ENCODE measurements at regions of chr5 and their contacts with region 1.

Region 1: GRCh38 chr5:132007399-132008165 is 3.9 kb downstream of the ACSL6 start:
- DNase-seq: peak; percentile 30 to 87 (median 65)
- ATAC-seq: peak; percentile 46 to 73 (median 55)
- H3K4me3 ChIP-seq: no peak overlapping the region
- H3K4me3 Mint-ChIP-seq: no peak overlapping the region
- H3K27ac ChIP-seq: no peak overlapping the region
- H3K27ac Mint-ChIP-seq: no peak overlapping the region
- H3K4me1 ChIP-seq: peaks cover 0 to 33% of the 10 kb centered on the region in 2 experiments
- H3K4me1 Mint-ChIP-seq: peaks cover 33 to 46% (median 33%) of the 10 kb centered on the region in 3 donors
- H3K27me3 ChIP-seq: peaks cover 0 to 39% of the 10 kb centered on the region in 2 experiments
- H3K27me3 Mint-ChIP-seq: peaks cover 8 to 18% of the 10 kb centered on the region in 2 donors

Region 2: DNA sequence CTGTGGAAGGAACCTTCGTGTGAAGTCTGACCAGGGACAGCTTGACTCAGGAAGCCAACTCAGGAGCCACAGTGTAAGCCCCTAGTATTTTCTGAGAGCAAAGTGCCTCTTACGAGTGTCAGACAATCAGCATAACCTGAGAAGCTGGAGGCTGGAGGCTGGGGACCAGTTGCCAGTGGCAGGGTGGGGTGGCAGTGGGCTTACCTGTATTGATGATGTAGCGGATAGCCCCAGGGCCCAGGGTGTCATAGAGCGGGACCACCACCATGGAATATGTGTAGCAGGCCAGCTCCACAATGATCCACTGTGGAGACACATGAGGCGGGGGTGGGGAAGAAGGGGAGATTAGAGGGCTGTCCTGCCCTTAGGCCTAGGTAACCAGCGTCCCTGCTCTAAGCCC is 19.0 kb before region 1 on chr5:
- CTCF ChIA-PET with region 1: interaction called in 1 of 2 experiments, 12 read pairs
- POLR2A ChIA-PET with region 1: no interaction called
- DNase-seq: no peak
- ATAC-seq: no peak
- H3K4me3 ChIP-seq: no peak overlapping the region
- H3K4me3 Mint-ChIP-seq: no peak overlapping the region
- H3K27ac ChIP-seq: no peak overlapping the region
- H3K27ac Mint-ChIP-seq: no peak overlapping the region
- H3K4me1 ChIP-seq: peaks cover 0 to under 1% of the 10 kb centered on the region in 2 experiments
- H3K4me1 Mint-ChIP-seq: peaks cover 0 to 6% (median 6%) of the 10 kb centered on the region in 3 donors
- H3K27me3 ChIP-seq: peaks cover 0 to 3% of the 10 kb centered on the region in 2 experiments
- H3K27me3 Mint-ChIP-seq: peaks cover 0 to 4% of the 10 kb centered on the region in 2 donors

Measured in T-cell (primary cell).